RWPE1 (cell line): ENCODE measurements at regions of chr3 and their contacts with region 1.

Region 1: DNA sequence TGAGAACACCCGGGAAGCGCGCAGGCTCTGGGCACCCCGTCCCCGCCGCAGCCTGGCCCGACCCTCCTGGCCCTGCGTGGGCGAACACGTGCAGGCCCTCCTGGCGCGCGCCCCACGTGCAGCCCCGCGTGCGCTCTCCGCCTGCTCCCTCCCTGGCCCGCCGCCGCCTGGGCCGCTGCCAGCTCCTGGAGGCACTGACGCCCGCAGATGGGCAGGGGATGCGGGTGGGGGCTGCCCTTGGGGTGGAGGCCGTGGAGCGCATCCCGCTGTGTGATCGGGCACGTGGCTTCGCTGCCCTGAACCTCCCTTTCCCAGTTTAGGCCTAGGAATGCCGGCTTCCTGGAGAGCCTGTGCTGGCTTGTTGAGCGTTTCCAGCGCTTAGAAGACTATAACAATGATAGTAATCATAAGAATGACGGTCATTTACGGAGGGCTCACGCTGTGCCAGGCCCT is 104.6 kb upstream of the SLC6A6 start:
- DNase-seq: peak; percentile 15
- H3K27ac ChIP-seq: no peak overlapping the region
- CTCF ChIP-seq: no peak

Region 2: GRCh38 chr3:14319654-14320182 is 21.9 kb after region 1 on chr3:
- CTCF ChIA-PET with region 1: no interaction called
- POLR2A ChIA-PET with region 1: no interaction called
- DNase-seq: peak; percentile 72
- H3K27ac ChIP-seq: no peak overlapping the region
- CTCF ChIP-seq: no peak

Region 3: GRCh38 chr3:14379843-14380242 is 82.0 kb after region 1 on chr3:
- CTCF ChIA-PET with region 1: interaction called, 10 read pairs
- POLR2A ChIA-PET with region 1: no interaction called
- DNase-seq: no peak
- H3K27ac ChIP-seq: no peak overlapping the region
- CTCF ChIP-seq: no peak